ENCODE measurements at regions of chr13 and their contacts with region 1.

Region 1: GRCh38 chr13:99214232-99214631 is 13.6 kb downstream of the UBAC2 start:
- DNase-seq: peak in 7 of 14 experiments; percentile 20 to 54 (median 35)
- ATAC-seq: peak; percentile 23
- H3K4me3 ChIP-seq: peak overlapping the region; percentile 27
- H3K4me3 Mint-ChIP-seq: peak overlapping the region; percentile 91
- H3K27ac ChIP-seq: peak overlapping the region; percentile 39 to 77
- H3K27ac Mint-ChIP-seq: peak overlapping the region; percentile 100
- H3K4me1 ChIP-seq: peaks cover 66% of the 10 kb centered on the region
- H3K4me1 Mint-ChIP-seq: peaks cover 83% of the 10 kb centered on the region
- H3K27me3 ChIP-seq: no peaks in the 10 kb centered on the region
- H3K27me3 Mint-ChIP-seq: no peaks in the 10 kb centered on the region
- CTCF ChIP-seq: no peak

Region 2: DNA sequence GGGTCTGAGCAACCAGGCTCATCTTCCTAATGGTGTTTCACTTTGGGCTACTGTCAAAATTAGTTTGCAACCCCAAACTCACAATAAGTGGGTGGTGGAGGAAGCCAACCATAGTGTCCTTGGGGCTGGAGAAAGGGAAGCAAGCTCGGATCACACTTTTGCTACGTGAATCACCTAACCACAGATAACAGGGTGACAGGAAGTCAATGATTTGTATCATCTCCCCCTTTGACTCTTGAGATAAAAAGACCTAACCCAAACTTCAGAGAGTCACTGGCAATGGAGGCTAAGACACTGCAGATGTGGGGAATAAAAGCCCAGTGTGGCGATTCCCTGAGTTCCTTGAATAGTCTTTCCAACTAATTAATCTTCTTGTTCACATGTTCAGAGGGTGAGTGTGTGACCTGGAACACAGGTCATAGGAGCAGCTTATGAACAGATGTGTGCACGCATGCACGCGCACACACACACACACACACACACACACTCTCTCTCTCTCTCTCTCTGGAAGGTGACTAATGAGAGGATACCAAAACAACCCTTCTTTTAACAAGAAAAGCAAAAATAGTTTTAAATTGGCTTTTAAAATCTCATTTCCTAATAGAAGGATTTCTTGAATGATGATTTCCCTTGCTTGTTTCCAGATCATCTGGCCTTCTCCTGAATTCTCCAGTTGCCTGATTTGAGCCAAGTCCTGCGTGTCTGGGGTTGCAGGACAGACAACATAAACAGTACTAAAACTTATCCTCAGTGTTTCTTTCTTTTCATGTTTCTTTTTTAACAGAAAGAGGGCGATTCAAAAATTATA is 215.2 kb before region 1 on chr13:
- CTCF ChIA-PET with region 1: no interaction called
- POLR2A ChIA-PET with region 1: no interaction called
- intact Hi-C with region 1: loop called in 1 of 2 experiments (anchors 5 kb)
- DNase-seq: peak in 10 of 14 experiments; percentile 9 to 73 (median 29)
- ATAC-seq: peak; percentile 71
- H3K4me3 ChIP-seq: no peak overlapping the region
- H3K4me3 Mint-ChIP-seq: peak overlapping the region; percentile 85
- H3K27ac ChIP-seq: peak overlapping the region in 1 of 2 donors; percentile 14
- H3K27ac Mint-ChIP-seq: peak overlapping the region; percentile 94
- H3K4me1 ChIP-seq: peaks cover 81% of the 10 kb centered on the region
- H3K4me1 Mint-ChIP-seq: peaks cover 99% of the 10 kb centered on the region
- H3K27me3 ChIP-seq: no peaks in the 10 kb centered on the region
- H3K27me3 Mint-ChIP-seq: no peaks in the 10 kb centered on the region
- CTCF ChIP-seq: no peak

Region 3: DNA sequence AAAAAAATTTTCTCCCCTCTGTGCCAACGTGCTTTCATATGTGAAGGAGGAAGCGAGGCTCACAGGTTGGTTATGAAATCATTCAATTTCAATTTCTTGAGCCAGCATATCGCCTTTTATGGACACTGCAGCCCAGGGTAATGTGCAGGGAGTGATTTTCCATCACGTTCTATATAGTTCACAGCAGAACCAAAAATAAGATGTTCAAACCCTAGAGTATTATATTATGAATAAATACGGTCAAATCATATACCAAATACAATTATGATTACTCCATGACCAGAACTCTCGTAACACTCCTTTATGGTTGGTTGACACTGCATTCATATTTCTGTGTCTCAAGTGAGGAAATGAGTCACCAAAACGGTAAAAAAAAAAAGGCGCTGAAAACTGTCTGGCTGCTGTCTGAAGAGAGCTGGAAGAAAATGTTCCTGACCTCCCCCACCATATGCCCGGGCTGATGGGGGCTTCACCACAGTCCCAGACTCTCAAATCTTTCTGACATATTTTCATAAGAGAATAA is 89.4 kb before region 1 on chr13:
- CTCF ChIA-PET with region 1: no interaction called
- POLR2A ChIA-PET with region 1: no interaction called
- intact Hi-C with region 1: no loop called
- DNase-seq: peak in 4 of 14 experiments; percentile 19 to 55 (median 26)
- ATAC-seq: peak; percentile 43
- H3K4me3 ChIP-seq: no peak overlapping the region
- H3K4me3 Mint-ChIP-seq: no peak overlapping the region
- H3K27ac ChIP-seq: no peak overlapping the region
- H3K27ac Mint-ChIP-seq: no peak overlapping the region
- H3K4me1 ChIP-seq: peaks cover 7% of the 10 kb centered on the region
- H3K4me1 Mint-ChIP-seq: peaks cover 23% of the 10 kb centered on the region
- H3K27me3 ChIP-seq: no peaks in the 10 kb centered on the region
- H3K27me3 Mint-ChIP-seq: no peaks in the 10 kb centered on the region
- CTCF ChIP-seq: no peak

Region 4: DNA sequence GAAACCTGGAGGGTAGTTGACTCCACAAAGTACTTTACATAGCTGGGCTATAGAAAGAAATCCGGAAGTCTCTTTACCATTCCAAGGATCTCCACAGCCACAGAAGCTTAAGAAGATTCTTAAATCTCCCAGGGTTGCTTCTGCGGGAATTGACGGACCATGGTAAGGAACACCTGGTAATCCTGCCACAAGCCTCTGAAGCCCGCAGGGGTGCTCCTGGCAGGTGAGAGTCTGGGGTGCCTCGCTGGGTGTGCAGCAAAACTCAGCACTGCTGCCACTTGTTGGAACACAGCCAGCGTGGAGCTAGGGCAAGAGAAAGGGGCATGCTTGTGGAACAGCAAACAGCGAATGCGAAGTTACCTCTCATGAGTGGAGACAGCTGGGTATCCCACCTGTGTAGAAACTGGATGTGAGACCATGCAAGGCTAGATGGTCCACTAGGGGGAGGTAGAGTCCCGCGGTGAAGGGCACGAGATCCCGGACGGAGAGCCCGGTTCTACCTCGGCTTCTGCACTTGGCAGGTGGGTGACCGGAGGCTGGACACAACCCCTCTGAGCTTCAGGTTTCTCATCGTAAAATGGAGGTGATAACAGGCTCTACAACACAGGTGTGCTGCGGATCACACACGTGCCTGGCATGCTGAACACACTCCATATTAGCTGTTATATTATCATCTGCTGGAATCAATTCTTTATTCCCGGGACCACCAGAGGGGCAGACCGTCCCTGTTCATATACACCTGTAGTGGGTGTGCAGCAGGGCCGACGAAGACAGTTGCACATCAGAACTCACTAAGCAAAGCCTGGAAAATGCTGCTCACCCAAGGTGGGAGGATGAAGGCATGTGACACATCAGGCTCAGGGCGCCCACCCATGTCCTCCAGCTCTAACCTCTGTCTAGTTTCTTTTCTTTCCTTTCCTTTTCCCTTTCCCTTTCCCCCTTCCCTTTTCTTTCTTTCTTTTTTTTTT is 37.6 kb before region 1 on chr13:
- CTCF ChIA-PET with region 1: interaction called, 10 read pairs
- POLR2A ChIA-PET with region 1: interaction called, 6 read pairs
- intact Hi-C with region 1: no loop called
- DNase-seq: peak; percentile 64 to 89 (median 74)
- ATAC-seq: peak; percentile 93
- H3K4me3 ChIP-seq: peak overlapping the region; percentile 16
- H3K4me3 Mint-ChIP-seq: peak overlapping the region; percentile 42
- H3K27ac ChIP-seq: no peak overlapping the region
- H3K27ac Mint-ChIP-seq: peak overlapping the region; percentile 76
- H3K4me1 ChIP-seq: peaks cover 41% of the 10 kb centered on the region
- H3K4me1 Mint-ChIP-seq: peaks cover 40% of the 10 kb centered on the region
- H3K27me3 ChIP-seq: no peaks in the 10 kb centered on the region
- H3K27me3 Mint-ChIP-seq: no peaks in the 10 kb centered on the region
- CTCF ChIP-seq: peak; percentile 94

Region 5: DNA sequence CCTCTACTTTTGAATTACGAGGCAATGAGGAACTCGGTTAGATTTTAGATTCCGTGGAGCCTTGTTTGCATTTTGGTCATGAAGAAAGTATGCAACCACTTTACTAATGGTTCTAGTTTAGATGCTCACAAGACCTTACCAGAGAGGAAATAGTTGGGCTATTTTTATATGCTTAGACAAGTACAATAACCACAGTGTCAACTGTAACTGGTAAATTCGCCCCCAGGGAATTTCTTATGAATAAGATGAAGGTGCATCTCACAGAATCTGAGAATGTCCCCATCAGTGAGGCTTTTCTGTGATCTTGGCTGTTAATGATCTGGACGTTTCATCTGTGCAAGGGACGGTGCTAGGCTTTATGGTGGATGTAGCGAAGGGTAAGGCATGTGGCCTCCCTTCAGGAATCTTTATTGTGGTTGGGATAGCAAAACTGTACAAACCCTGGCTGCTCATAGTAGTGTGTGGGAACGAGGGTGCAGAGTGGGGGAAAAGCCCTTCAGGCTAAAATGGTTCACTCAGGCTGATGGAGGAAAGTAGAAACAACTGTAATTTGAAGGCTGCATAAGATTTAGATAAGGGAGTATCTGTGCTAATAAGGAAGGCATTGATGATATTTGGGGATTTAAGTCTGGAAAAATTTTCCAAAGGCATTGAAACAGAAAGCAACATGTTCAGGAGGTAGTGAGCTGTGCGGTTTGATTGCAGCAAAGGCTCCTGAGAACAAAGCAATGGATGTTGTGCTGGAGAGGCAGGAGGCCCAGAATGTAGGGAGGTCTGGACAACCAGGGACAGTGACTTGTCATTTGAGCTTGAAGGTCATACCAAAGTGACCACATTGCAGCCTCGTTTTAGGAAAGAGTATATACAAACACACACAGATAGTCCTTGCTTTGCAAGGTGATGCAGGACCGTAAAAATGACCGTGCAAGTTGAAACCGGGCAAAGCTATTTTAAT is 14.8 kb after region 1 on chr13:
- CTCF ChIA-PET with region 1: interaction called, 4 read pairs
- POLR2A ChIA-PET with region 1: interaction called, 24 read pairs
- intact Hi-C with region 1: no loop called
- DNase-seq: peak in 3 of 14 experiments; percentile 48 to 52 (median 48)
- ATAC-seq: peak; percentile 30
- H3K4me3 ChIP-seq: peak overlapping the region; percentile 2
- H3K4me3 Mint-ChIP-seq: peak overlapping the region; percentile 69
- H3K27ac ChIP-seq: peak overlapping the region; percentile 31 to 45
- H3K27ac Mint-ChIP-seq: peak overlapping the region; percentile 75
- H3K4me1 ChIP-seq: peaks cover 74% of the 10 kb centered on the region
- H3K4me1 Mint-ChIP-seq: peaks cover 83% of the 10 kb centered on the region
- H3K27me3 ChIP-seq: no peaks in the 10 kb centered on the region
- H3K27me3 Mint-ChIP-seq: no peaks in the 10 kb centered on the region
- CTCF ChIP-seq: no peak

Region 6: DNA sequence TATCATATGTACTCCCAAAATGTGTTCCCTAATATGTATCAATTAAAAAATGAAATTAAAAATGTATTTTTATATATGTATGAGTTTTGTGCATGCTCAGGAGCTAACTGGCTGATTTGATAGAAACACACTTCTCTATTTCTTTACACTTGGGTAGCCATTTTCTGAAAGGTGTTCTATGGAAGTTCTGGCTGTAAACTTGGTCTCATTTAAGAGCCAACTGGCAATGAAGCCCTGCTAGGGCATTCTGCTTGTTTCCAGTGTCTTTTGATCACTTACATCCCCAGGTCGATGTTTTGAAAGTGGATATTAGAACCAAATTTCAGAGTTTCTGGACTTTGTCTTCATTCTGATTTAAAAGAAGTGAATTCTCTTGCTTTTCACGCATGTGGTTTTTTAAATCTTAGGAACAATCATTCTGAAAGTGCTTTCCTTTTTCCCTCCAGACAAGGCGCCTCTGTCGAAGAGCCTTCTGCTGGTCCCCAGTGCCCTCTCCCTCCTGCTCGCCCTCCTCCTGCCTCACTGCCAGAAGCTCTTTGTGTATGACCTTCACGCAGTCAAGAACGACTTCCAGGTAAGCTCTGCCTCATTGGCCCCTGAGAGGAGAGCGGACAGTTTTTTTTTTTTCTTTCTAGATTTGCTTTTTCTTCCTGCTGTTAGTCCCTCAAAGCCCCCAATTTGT is 23.9 kb after region 1 on chr13:
- CTCF ChIA-PET with region 1: interaction called, 4 read pairs
- POLR2A ChIA-PET with region 1: interaction called, 18 read pairs
- intact Hi-C with region 1: no loop called
- DNase-seq: peak in 5 of 14 experiments; percentile 26 to 73 (median 62)
- ATAC-seq: peak; percentile 77
- H3K4me3 ChIP-seq: peak overlapping the region; percentile 45
- H3K4me3 Mint-ChIP-seq: peak overlapping the region; percentile 83
- H3K27ac ChIP-seq: peak overlapping the region; percentile 72 to 73
- H3K27ac Mint-ChIP-seq: peak overlapping the region; percentile 94
- H3K4me1 ChIP-seq: peaks cover 32% of the 10 kb centered on the region
- H3K4me1 Mint-ChIP-seq: peaks cover 72% of the 10 kb centered on the region
- H3K27me3 ChIP-seq: no peaks in the 10 kb centered on the region
- H3K27me3 Mint-ChIP-seq: no peaks in the 10 kb centered on the region
- CTCF ChIP-seq: no peak

Region 7: GRCh38 chr13:99258210-99258860 is 44.1 kb after region 1 on chr13 and contains the start of gene GPR18:
- CTCF ChIA-PET with region 1: interaction called, 4 read pairs
- POLR2A ChIA-PET with region 1: interaction called, 76 read pairs
- intact Hi-C with region 1: loop called in 1 of 2 experiments (anchors 1 kb)
- DNase-seq: peak in 6 of 14 experiments; percentile 27 to 88 (median 66)
- ATAC-seq: peak; percentile 75
- H3K4me3 ChIP-seq: peak within 1 kb of the TSS; percentile 69
- H3K4me3 Mint-ChIP-seq: peak within 1 kb of the TSS; percentile 94
- H3K27ac ChIP-seq: peak within 1 kb of the TSS; percentile 70 to 78
- H3K27ac Mint-ChIP-seq: peak within 1 kb of the TSS; percentile 92
- H3K4me1 ChIP-seq: peaks cover 22% of the 10 kb centered on the region
- H3K4me1 Mint-ChIP-seq: peaks cover 83% of the 10 kb centered on the region
- H3K27me3 ChIP-seq: no peaks in the 10 kb centered on the region
- H3K27me3 Mint-ChIP-seq: no peaks in the 10 kb centered on the region
- CTCF ChIP-seq: no peak
- total RNA-seq, gene GPR18: 42.9 to 45.1 TPM

Region 8: GRCh38 chr13:99380921-99381645 is 166.9 kb after region 1 on chr13:
- CTCF ChIA-PET with region 1: no interaction called
- POLR2A ChIA-PET with region 1: no interaction called
- intact Hi-C with region 1: loop called in 1 of 2 experiments (anchors 5 kb)
- DNase-seq: peak in 13 of 14 experiments; percentile 42 to 77 (median 57)
- ATAC-seq: peak; percentile 40
- H3K4me3 ChIP-seq: no peak overlapping the region
- H3K4me3 Mint-ChIP-seq: peak overlapping the region; percentile 65
- H3K27ac ChIP-seq: peak overlapping the region; percentile 65 to 87
- H3K27ac Mint-ChIP-seq: peak overlapping the region; percentile 88
- H3K4me1 ChIP-seq: peaks cover 89% of the 10 kb centered on the region
- H3K4me1 Mint-ChIP-seq: peaks cover 95% of the 10 kb centered on the region
- H3K27me3 ChIP-seq: no peaks in the 10 kb centered on the region
- H3K27me3 Mint-ChIP-seq: no peaks in the 10 kb centered on the region
- CTCF ChIP-seq: no peak

Measured in CD4-positive, alpha-beta T cell (primary cell).